ENCODE measurements at regions of chr13 and their contacts with region 1.

Region 1: DNA sequence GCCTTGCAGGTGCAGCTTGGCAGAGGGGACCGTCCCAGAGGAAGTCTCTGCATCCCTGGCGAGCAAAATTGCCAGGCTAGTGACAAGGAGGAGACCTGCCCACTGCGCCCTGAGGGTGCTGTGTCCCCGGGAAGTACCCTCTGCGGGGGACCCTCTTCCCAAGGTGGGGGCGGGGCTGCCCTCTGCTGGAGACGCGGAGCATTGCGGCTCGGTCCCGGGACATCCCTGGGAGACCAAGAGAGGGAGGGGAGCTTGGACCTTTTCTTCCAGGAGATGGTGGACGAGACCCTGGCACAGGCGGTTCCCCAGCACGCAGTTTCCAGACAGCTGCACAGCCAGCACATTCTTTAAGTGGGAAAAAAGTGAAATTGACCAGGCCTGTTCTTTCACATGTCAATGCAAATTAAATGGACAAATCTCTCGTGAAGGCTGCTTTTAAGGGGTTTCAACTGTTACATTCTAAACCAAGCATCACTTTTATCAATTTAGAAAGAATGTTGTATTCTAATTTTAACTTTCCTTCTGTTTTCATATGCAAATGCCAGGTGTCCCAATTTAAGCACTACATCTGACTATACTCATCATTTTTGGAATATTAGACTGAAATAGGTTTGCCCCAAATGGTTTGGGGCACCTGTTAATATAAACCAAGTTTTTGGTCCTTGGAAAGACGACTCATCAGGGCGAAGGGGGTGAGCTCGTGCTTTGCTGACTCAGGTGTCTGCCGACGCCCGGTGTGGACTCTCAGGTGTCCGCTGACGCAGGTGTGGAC is 60.7 kb downstream of the MCF2L start:
- H3K4me3 ChIP-seq: no peak overlapping the region
- H3K27ac ChIP-seq: no peak overlapping the region
- H3K4me1 ChIP-seq: no peaks in the 10 kb centered on the region
- CTCF ChIP-seq: no peak

Region 2: GRCh38 chr13:112942689-112943308 is 86.9 kb before region 1 on chr13:
- CTCF ChIA-PET with region 1: interaction called, 42 read pairs
- POLR2A ChIA-PET with region 1: no interaction called
- H3K4me3 ChIP-seq: peak overlapping the region; percentile 37
- H3K27ac ChIP-seq: peak overlapping the region; percentile 46; the same call in 1 of the 2 replicates
- H3K4me1 ChIP-seq: no peaks in the 10 kb centered on the region; the same call in 1 of the 2 replicates
- CTCF ChIP-seq: no peak

Region 3: DNA sequence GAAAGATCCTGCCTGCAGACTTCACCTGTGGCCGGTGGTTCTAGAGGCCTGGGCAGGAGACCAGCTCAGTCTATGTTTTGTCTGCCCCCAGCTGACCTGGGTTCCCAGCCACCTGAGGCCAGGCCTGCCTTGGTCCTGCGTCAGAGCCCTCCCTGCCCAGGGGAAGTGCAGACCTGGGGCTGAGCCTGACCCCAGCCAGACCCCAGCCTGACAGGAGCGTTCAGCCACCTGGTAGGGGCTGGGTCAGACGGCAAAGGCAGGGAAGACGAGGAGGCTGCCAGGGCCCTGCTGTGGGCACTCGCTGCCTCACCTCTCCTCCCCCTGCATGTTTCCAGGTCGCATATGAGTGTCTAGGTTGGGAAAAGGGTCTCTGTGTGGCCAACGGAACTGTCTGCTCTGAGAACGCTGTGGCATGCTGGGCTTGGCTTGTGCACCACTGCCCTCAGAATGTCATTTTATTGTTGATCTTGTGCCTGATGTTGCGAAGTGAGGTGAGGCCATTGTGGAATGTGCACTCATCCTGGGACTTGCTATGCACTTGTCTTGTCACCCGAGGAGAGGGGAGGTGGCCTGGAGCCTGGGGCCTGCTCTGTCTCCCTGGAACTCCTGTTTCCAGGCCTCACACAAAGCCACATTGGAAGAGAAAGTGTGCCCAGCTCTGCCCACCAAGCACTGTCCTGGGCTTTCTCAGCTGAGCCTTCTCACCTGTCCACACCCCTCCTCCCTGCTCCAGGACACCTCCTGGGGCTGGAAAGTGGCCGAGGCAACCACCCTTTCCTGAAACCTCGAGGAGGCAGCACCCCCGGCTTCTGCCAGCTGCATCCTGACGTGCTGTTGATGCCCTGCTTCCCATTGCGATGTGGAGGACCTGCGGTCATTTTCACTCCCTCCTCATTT is 75.8 kb before region 1 on chr13:
- CTCF ChIA-PET with region 1: interaction called, 10 read pairs
- POLR2A ChIA-PET with region 1: no interaction called
- H3K4me3 ChIP-seq: no peak overlapping the region
- H3K27ac ChIP-seq: no peak overlapping the region
- H3K4me1 ChIP-seq: no peaks in the 10 kb centered on the region
- CTCF ChIP-seq: no peak

Region 4: GRCh38 chr13:113506025-113506685 is 476.5 kb after region 1 on chr13:
- CTCF ChIA-PET with region 1: no interaction called
- POLR2A ChIA-PET with region 1: no interaction called
- H3K4me3 ChIP-seq: no peak overlapping the region
- H3K27ac ChIP-seq: no peak overlapping the region
- H3K4me1 ChIP-seq: no peaks in the 10 kb centered on the region
- CTCF ChIP-seq: no peak

Measured in HEK293 (cell line).